Left cardiac atrium (tissue), 4 donors: ENCODE measurements at regions of chr1 and their contacts with region 1.

Region 1: GRCh38 chr1:147162093-147162492 is 10.2 kb downstream of the PRKAB2 start:
- DNase-seq: no peak
- ATAC-seq: no peak

Region 2: DNA sequence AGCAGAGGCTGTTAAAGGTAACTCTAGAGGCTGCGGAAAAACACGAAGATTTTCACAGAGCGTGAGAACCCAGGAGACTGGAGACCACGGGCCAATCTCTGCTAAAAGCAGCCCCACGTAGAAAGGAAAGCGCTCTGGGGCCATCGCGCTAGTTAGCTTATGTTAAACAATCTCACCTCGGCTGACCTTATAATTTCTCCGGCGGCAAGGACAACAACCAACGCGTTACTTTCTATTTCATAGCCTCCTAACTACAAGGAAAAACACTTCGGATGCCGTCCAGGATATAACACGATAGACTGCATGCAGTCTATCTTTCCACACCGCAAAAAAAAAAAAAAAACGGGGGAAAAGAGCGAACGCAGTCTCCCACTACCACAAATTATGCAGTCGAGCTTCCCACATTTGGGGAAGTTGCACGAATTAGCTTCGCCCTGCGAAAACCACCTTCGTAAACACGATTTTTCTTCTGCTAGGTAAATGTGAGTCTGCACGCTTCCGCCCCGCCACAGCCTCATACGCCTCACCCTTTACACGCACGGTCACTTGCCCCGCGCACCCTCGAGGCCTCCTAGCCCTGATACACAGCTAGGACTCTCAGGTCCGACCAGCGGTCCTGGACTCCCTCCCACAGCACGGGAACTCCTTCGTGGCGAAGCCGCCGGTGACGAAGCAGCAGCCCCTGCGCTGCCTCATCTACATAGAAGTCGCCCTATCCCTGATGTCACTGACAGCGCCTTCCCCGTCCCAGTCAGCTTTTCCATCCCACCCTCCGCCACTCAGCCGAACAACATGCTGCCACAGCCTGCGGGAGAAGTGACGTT is 77.6 kb before region 1 on chr1:
- intact Hi-C with region 1: loop called in 1 of 2 experiments (anchors 5 kb)
- DNase-seq: peak; percentile 75
- ATAC-seq: peak; percentile 91 to 95